Activated CD4-positive, alpha-beta memory T cell treated with anti-CD3 and anti-CD28 coated beads, Interleukin-2, amount 10 ng/mL, durations not matched to agents 7 days and 5 days (primary cell): ENCODE measurements at regions of chr22 and their contacts with region 1.

Region 1: GRCh38 chr22:20418211-20418788 is 19.3 kb downstream of the SCARF2 start:
- DNase-seq: peak; percentile 76
- H3K4me3 Mint-ChIP-seq: peak overlapping the region; percentile 30
- H3K27ac Mint-ChIP-seq: no peak overlapping the region
- H3K4me1 Mint-ChIP-seq: peaks cover 9% of the 10 kb centered on the region
- H3K27me3 Mint-ChIP-seq: peaks cover 8% of the 10 kb centered on the region

Region 2: DNA sequence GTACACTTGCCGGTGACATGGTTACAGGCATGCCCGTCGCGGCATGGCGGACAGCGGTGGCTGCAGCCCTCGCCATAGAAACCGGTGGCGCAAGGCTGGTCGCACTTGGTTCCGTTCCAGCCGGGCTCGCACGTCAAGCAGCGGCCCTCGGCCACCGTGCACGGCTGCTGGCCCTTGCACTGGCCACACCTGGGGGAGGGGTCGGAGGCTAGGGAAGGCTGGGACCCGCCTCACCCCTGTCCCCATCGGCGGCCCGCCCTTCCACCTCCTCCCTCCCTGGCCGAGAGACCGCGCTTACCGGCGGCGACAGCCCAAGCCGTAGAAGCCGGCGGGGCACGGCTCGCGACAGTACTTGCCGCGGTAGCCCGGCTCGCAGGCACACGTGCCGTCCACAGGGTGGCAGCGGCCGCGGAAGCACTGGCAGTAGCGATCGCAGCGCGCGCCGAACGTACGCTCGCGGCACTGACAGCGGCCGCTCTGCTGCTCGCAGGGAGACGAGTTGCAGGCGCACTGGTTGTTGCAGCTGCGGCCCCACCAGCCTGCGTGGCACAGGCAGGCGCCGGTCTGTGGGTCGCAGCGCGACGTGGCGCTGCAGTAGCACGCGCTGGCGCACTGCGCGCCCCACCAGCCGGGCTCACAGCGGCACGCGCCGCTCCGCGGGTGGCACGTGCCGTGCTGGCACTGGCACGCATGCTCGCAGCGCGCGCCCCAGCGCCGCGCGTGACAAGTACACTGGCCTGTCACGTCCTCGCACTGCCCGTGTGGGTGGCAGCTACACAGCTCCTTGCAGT is 12.6 kb after region 1 on chr22:
- CTCF ChIA-PET with region 1: interaction called, 16 read pairs
- POLR2A ChIA-PET with region 1: no interaction called
- DNase-seq: peak; percentile 65
- H3K4me3 Mint-ChIP-seq: peak overlapping the region; percentile 64
- H3K27ac Mint-ChIP-seq: no peak overlapping the region
- H3K4me1 Mint-ChIP-seq: peaks cover 23% of the 10 kb centered on the region
- H3K27me3 Mint-ChIP-seq: peaks cover 73% of the 10 kb centered on the region

Region 3: GRCh38 chr22:20456064-20456721 is 37.9 kb after region 1 on chr22:
- CTCF ChIA-PET with region 1: interaction called, 93 read pairs
- POLR2A ChIA-PET with region 1: interaction called, 3 read pairs
- DNase-seq: peak; percentile 75
- H3K4me3 Mint-ChIP-seq: no peak overlapping the region
- H3K27ac Mint-ChIP-seq: no peak overlapping the region
- H3K4me1 Mint-ChIP-seq: peaks cover 14% of the 10 kb centered on the region
- H3K27me3 Mint-ChIP-seq: no peaks in the 10 kb centered on the region

Region 4: GRCh38 chr22:20463324-20464095 is 45.2 kb after region 1 on chr22:
- CTCF ChIA-PET with region 1: interaction called, 23 read pairs
- POLR2A ChIA-PET with region 1: interaction called, 9 read pairs
- DNase-seq: peak; percentile 52
- H3K4me3 Mint-ChIP-seq: peak overlapping the region; percentile 38
- H3K27ac Mint-ChIP-seq: peak overlapping the region; percentile 99
- H3K4me1 Mint-ChIP-seq: peaks cover 49% of the 10 kb centered on the region
- H3K27me3 Mint-ChIP-seq: no peaks in the 10 kb centered on the region

Region 5: DNA sequence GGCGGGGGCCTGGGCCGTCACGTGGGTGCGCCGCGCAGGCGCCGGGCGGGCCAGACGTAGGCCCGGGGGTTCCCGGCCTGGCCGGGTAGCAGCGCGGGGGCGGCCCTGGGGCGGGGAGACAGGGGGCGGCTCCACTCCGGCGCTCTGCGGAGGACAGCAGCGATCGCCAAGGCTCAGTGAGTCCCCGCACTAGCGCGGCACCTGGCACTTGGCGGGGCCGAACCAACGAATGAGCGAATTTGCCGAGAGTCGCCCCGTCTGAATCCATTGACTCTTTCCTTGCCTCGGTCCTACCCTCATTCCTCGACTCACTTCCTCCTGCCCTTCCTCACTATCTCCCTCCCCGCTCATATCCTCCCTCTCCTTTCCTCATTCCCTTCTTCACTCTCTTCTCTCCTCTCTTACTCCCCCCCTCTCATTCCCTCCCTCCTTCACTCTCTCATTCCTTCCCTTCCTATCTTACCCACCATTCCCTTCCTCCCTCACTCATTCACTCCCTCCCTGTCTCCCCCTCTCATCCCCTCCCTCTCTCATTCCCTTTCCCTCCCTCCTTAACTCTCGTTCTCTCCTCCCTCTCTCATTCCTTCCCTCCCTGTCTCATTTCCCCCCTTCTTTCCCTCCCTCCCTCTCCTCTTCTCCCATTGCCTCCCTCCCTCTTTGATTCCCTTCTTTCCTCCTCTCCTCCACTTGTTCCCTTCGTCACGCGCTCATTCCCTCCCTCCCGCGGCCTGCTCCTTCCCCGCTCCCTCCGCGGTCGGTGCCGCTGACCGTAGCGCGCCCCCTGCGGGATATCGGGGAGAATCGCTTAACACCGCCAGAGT is 77.8 kb after region 1 on chr22:
- CTCF ChIA-PET with region 1: interaction called, 21 read pairs
- POLR2A ChIA-PET with region 1: no interaction called
- DNase-seq: peak; percentile 92
- H3K4me3 Mint-ChIP-seq: peak overlapping the region; percentile 88
- H3K27ac Mint-ChIP-seq: peak overlapping the region; percentile 58
- H3K4me1 Mint-ChIP-seq: peaks cover 34% of the 10 kb centered on the region
- H3K27me3 Mint-ChIP-seq: no peaks in the 10 kb centered on the region

Region 6: DNA sequence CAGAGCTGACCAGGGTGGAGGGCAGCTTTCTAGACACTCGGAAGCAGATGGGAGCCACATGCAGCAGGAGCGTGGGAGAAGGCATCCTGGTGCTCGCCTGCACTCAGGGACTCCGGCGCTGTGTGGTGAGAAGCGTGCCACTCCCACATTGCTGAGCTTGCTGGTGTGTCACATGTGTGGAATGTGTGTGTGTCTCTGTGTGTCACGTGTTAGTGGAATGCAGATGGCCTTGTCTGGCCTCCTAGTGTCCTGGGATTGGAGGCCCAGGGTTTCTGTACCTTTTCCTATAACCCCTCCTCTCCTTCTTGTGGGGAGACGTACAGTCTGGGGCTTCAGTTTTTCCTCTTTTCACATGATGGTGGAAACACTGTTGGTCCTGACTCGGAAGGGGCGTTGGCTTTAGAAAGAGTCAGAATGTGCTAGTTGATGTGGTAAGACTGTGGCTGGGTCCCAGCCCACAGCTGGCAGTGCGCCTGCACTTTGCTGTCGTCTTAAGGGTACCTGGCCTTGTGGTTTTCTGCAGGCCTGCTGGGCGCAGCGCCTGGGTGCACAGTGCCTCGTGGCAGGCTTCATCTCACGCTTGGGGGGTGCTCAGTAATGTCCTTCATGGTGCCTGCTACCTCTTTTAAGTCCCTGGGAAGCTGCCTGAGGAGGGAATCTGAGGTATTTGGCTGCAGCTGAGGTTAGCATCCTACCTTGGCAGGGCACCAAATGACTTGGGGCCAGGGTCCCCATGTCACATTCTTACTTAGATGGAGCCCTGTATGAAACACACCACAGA is 150.9 kb after region 1 on chr22:
- CTCF ChIA-PET with region 1: interaction called, 19 read pairs
- POLR2A ChIA-PET with region 1: no interaction called
- DNase-seq: peak; percentile 92
- H3K4me3 Mint-ChIP-seq: peak overlapping the region; percentile 54
- H3K27ac Mint-ChIP-seq: peak overlapping the region; percentile 96
- H3K4me1 Mint-ChIP-seq: peaks cover 86% of the 10 kb centered on the region
- H3K27me3 Mint-ChIP-seq: no peaks in the 10 kb centered on the region

Region 7: GRCh38 chr22:20741634-20742581 is 323.6 kb after region 1 on chr22:
- CTCF ChIA-PET with region 1: interaction called, 10 read pairs
- POLR2A ChIA-PET with region 1: no interaction called
- DNase-seq: peak; percentile 45
- H3K4me3 Mint-ChIP-seq: no peak overlapping the region
- H3K27ac Mint-ChIP-seq: no peak overlapping the region
- H3K4me1 Mint-ChIP-seq: peaks cover 7% of the 10 kb centered on the region
- H3K27me3 Mint-ChIP-seq: no peaks in the 10 kb centered on the region